ENCODE measurements at regions of chrX and their contacts with region 1.

Region 1: DNA sequence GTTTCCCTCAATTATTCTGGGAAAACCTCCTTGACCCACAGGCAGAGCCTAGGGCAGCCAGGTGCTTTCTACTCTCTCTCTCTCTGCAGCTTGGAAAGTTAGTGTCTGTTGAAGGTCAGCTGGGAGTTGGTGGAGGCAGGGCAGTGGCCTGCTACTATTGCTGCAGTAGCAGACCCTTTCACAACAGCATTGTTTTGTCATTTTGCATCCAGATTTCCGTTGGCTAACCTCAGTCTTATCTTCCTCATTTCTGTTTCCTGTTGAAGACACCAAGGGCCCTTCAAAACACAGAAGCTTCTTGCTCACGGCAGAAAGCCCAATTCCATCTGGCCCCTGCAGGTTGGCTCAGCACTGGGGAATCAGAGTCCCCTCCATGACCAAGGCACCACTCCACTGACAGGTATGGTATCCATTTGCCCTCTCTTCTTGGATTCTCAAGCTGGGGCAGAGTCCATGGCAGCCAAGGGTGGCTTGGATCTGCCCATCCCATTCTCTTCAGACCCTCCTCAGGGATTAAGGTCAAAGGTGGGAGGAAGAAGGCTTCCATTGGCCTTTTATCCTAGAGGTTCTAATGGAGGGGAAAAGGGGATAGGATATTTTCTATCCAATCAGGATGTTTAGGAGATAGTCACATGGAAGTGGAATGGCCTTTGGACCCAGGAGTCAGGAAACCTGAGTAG is 24.6 kb downstream of the VSIG4 start:
- DNase-seq: peak; percentile 17
- H3K4me3 Mint-ChIP-seq: peak overlapping the region; percentile 62
- H3K27ac Mint-ChIP-seq: peak overlapping the region; percentile 73
- H3K4me1 Mint-ChIP-seq: peaks cover 77% of the 10 kb centered on the region
- H3K27me3 Mint-ChIP-seq: no peaks in the 10 kb centered on the region

Region 2: DNA sequence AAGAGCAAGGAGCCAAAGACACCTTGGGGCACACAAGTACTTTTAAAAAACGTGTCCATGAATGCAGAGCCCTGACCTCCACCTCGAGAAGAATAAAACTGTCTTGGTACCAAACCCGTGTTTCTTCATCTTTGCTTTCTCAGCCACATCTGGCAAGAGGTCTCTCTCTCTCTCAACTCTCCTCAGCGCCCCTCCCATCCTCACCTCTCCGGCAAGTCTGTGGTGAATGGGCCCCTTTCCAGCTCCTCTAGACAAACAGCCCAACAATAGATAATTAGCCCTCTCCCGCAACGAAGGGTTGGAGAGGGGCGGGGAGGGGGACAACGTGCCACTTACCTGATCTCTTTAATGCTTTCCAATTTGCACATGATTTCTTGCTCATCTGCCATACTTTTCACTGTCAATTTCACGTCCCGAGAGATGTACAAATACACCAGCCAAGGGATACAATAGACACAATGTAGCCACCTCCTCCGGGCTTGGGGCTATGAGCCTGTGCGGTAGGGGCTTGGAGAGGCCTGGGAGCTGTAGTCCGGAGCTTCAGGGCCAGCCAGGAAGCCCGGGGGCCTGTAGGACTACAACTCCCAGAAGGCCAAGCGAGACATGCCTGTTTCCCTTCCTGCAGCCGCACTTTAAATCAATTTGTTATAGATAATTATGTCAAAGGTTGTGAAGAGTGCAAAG is 1039.2 kb before region 1 on chrX and contains the start of gene ZC4H2:
- intact Hi-C with region 1: loop called (anchors 5 kb)
- DNase-seq: peak; percentile 54
- H3K4me3 Mint-ChIP-seq: peak within 1 kb of the TSS; percentile 93
- H3K27ac Mint-ChIP-seq: peak within 1 kb of the TSS; percentile 61
- H3K4me1 Mint-ChIP-seq: peaks cover 20% of the 10 kb centered on the region
- H3K27me3 Mint-ChIP-seq: no peaks in the 10 kb centered on the region
- total RNA-seq, gene ZC4H2: 8.9 and 9.3 TPM in 2 replicates

Region 3: GRCh38 chrX:65667503-65668376 is 347.6 kb before region 1 on chrX and contains the start of gene MSN:
- intact Hi-C with region 1: loop called (anchors 10 kb)
- DNase-seq: peak; percentile 74
- H3K4me3 Mint-ChIP-seq: peak within 1 kb of the TSS; percentile 96
- H3K27ac Mint-ChIP-seq: peak within 1 kb of the TSS; percentile 96
- H3K4me1 Mint-ChIP-seq: peaks cover 48% of the 10 kb centered on the region
- H3K27me3 Mint-ChIP-seq: no peaks in the 10 kb centered on the region
- total RNA-seq, gene MSN: 473 and 476 TPM in 2 replicates

Region 4: DNA sequence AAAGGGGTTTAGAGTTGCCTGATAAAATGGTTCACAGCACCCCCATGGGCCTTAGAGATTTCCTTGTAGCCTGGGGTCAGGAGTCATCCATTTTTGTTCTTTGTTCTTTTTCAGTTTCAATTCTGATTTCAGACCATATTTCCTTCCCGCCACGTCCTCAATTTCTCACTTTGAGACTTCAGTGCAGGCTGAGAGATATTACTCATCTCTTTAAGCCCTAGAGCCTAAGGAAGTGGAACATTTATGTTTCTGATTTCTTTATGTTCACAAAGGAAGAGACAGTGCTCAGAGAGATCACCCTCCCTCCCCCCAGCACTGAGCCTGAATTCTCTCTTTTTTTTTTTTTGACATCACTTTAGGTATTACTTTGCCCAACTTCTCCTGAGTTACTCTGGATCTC is 291.6 kb before region 1 on chrX:
- intact Hi-C with region 1: loop called (anchors 10 kb)
- DNase-seq: peak; percentile 16
- H3K4me3 Mint-ChIP-seq: peak overlapping the region; percentile 4
- H3K27ac Mint-ChIP-seq: peak overlapping the region; percentile 82
- H3K4me1 Mint-ChIP-seq: peaks cover 66% of the 10 kb centered on the region
- H3K27me3 Mint-ChIP-seq: no peaks in the 10 kb centered on the region

Region 5: DNA sequence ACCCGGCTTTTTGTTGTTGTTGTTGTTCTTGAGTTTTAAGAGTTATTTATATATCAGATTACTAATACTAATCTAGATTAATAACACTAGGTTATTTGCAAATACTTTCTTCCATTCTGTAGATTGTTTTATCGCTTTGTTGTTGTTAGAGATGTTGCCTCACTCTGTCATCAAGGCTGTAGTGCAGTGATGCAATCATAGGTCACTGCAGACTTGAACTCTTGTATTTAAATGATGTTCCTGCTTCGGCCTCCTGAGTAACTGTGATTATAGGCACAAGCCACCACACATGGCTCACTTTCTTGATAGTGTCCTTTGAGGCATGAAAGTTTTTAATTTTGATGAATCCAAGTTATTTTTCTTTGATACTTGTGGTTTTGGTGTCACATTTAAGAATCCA is 104.4 kb before region 1 on chrX:
- intact Hi-C with region 1: no loop called
- DNase-seq: no peak
- H3K4me3 Mint-ChIP-seq: no peak overlapping the region
- H3K27ac Mint-ChIP-seq: no peak overlapping the region
- H3K4me1 Mint-ChIP-seq: no peaks in the 10 kb centered on the region
- H3K27me3 Mint-ChIP-seq: no peaks in the 10 kb centered on the region

Region 6: GRCh38 chrX:65976161-65976560 is 39.1 kb before region 1 on chrX:
- intact Hi-C with region 1: no loop called
- DNase-seq: no peak
- H3K4me3 Mint-ChIP-seq: no peak overlapping the region
- H3K27ac Mint-ChIP-seq: no peak overlapping the region
- H3K4me1 Mint-ChIP-seq: no peaks in the 10 kb centered on the region
- H3K27me3 Mint-ChIP-seq: peaks cover 5% of the 10 kb centered on the region

Region 7: GRCh38 chrX:65997978-65998717 is 17.1 kb before region 1 on chrX:
- intact Hi-C with region 1: loop called (anchors 2 kb)
- DNase-seq: no peak
- H3K4me3 Mint-ChIP-seq: no peak overlapping the region
- H3K27ac Mint-ChIP-seq: no peak overlapping the region
- H3K4me1 Mint-ChIP-seq: peaks cover 52% of the 10 kb centered on the region
- H3K27me3 Mint-ChIP-seq: no peaks in the 10 kb centered on the region

Region 8: GRCh38 chrX:66030505-66031317 is 15.4 kb after region 1 on chrX:
- intact Hi-C with region 1: loop called (anchors 2 kb)
- DNase-seq: no peak
- H3K4me3 Mint-ChIP-seq: no peak overlapping the region
- H3K27ac Mint-ChIP-seq: no peak overlapping the region
- H3K4me1 Mint-ChIP-seq: peaks cover 4% of the 10 kb centered on the region
- H3K27me3 Mint-ChIP-seq: no peaks in the 10 kb centered on the region

Region 9: DNA sequence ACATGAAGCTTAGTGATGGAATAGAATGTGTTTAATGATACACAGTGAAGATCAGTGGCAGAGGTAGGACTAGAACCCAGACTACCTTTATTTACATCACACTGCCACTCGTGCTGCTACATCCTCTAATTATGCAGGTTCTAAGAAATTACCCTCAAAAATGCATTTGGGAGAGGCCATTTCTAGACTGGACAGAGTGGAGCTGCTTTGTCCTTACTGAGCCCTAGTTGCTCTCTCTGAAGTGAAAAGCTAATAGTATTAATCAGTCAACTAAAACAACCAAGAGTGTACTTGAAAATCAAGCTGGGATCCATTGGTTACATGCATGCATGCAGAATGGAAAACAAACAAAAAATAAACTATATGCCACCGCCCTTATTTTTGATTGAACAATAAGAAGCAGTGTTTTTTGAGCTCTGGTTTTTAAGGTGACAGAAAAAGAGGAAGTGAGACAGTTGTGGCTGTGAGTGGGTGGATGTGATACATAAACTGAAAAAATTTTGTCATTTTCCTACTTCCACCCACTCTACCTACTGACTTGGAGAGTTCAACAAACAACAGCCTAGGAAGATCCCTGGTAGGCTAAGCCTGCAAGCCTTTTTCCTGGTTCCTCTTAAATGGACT is 31.4 kb after region 1 on chrX:
- intact Hi-C with region 1: loop called (anchors 2 kb)
- DNase-seq: no peak
- H3K4me3 Mint-ChIP-seq: no peak overlapping the region
- H3K27ac Mint-ChIP-seq: peak overlapping the region; percentile 95
- H3K4me1 Mint-ChIP-seq: peaks cover 29% of the 10 kb centered on the region
- H3K27me3 Mint-ChIP-seq: no peaks in the 10 kb centered on the region